ENCODE measurements at regions of chr1 and their contacts with region 1.

Region 1: GRCh38 chr1:224644553-224645154 is 28.5 kb downstream of the CNIH3 start:
- H3K4me3 ChIP-seq: no peak overlapping the region
- H3K27ac ChIP-seq: no peak overlapping the region
- H3K4me1 ChIP-seq: no peaks in the 10 kb centered on the region
- CTCF ChIP-seq: peak; percentile 83

Region 2: GRCh38 chr1:224434691-224435317 is 209.8 kb before region 1 on chr1 and contains the start of gene WDR26:
- CTCF ChIA-PET with region 1: no interaction called
- POLR2A ChIA-PET with region 1: no interaction called
- H3K4me3 ChIP-seq: peak within 1 kb of the TSS; percentile 96
- H3K27ac ChIP-seq: peak within 1 kb of the TSS; percentile 76; the same call in 1 of the 2 replicates
- H3K4me1 ChIP-seq: peaks cover 30% of the 10 kb centered on the region
- CTCF ChIP-seq: peak; percentile 96

Region 3: GRCh38 chr1:224623743-224624333 is 20.8 kb before region 1 on chr1:
- CTCF ChIA-PET with region 1: interaction called, 10 read pairs
- POLR2A ChIA-PET with region 1: no interaction called
- H3K4me3 ChIP-seq: no peak overlapping the region
- H3K27ac ChIP-seq: peak overlapping the region; percentile 35
- H3K4me1 ChIP-seq: peaks cover 30% of the 10 kb centered on the region
- CTCF ChIP-seq: no peak

Region 4: GRCh38 chr1:224632381-224632871 is 12.2 kb before region 1 on chr1:
- CTCF ChIA-PET with region 1: interaction called, 48 read pairs
- POLR2A ChIA-PET with region 1: no interaction called
- H3K4me3 ChIP-seq: no peak overlapping the region
- H3K27ac ChIP-seq: no peak overlapping the region
- H3K4me1 ChIP-seq: peaks cover 14% of the 10 kb centered on the region
- CTCF ChIP-seq: no peak

Region 5: DNA sequence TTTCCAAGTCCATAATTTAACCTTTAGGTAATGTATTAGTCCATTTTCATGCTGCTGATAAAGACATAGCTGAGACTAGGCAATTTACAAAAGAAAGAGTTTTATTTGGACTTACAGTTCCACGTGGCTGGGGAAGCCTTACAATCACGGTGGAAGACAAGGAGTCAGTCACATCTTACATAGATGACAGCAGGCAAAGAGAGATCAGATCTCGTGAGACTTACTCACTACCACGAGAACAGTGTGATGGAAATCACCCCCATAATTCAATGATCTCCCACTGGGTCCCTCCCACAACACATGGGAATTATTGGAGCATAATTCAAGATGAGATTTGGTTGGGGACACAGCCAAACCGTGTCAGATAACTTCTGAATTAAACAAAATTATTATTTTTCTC is 15.4 kb after region 1 on chr1:
- CTCF ChIA-PET with region 1: interaction called, 18 read pairs
- POLR2A ChIA-PET with region 1: no interaction called
- H3K4me3 ChIP-seq: no peak overlapping the region
- H3K27ac ChIP-seq: no peak overlapping the region
- H3K4me1 ChIP-seq: no peaks in the 10 kb centered on the region
- CTCF ChIP-seq: no peak

Region 6: DNA sequence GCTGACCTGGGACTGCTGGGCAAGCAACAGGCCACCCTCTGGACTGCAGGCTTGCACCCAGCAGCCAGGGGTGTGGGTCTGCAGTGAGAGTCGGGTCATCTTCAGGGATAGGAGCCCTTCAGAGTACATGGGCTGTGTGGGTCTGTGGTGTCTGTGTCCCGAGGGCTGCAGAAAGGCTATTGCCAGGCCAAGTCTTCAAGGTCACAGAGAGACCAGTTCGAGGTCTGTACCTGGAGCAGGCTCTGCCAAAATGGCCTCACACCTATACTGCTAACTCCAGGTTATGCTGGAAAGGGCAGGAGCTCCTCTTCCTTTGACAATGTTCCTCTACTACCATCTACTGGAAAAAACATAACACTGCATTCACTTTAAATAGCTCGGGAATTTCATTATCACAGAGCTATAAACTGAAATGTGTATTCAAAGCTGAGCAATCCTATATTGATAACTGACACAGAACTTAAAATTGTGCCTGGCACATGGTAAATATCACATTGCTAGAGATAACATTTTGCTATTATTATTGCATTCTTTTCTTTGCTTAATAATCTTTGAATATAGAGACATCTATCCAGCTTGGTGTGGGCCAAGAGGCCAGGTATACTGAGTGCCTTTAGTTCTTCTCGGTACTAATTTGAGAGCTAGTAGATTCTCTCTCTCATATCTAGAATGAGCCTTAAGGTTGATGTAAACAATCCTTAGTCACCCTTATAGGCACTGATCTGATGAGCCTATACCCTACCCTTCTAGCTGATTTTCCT is 277.9 kb after region 1 on chr1:
- CTCF ChIA-PET with region 1: interaction called, 20 read pairs
- POLR2A ChIA-PET with region 1: no interaction called
- H3K4me3 ChIP-seq: no peak overlapping the region
- H3K27ac ChIP-seq: no peak overlapping the region
- H3K4me1 ChIP-seq: no peaks in the 10 kb centered on the region
- CTCF ChIP-seq: peak; percentile 87